Mammary epithelial cell (primary cell): ENCODE measurements at regions of chr20 and their contacts with region 1.

Region 1: GRCh38 chr20:14189794-14190402 is 147.5 kb downstream of the FLRT3 start:
- DNase-seq: peak; percentile 44
- H3K4me3 ChIP-seq: no peak overlapping the region
- H3K27ac ChIP-seq: no peak overlapping the region
- H3K4me1 ChIP-seq: peaks cover 5% of the 10 kb centered on the region
- H3K27me3 ChIP-seq: no peaks in the 10 kb centered on the region
- CTCF ChIP-seq: peak; percentile 52 to 65

Region 2: DNA sequence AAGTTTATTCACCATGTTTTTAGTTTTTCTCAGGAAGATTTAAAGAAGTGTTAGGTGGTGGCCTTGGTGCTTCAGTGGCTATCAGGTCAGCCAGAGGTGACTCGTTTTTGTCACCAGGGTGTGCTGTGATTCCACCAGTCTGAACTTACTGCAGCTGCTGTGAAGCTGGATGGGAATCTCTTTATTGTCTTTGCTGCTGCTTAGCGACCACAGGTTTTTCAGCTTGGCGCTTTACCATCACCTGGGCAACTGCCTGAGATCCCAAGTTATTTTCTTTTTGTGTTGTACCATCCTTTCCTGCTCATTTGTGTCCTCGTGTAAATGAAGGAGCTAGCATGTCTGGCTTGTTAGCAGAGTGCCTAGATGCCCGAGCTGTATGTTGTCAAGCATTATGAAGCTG is 47.7 kb before region 1 on chr20:
- CTCF ChIA-PET with region 1: no interaction called
- dilution Hi-C with region 1: no loop called
- in situ Hi-C with region 1: no loop called
- intact Hi-C with region 1: loop called (anchors 1 kb)
- DNase-seq: peak; percentile 66
- H3K4me3 ChIP-seq: no peak overlapping the region
- H3K27ac ChIP-seq: no peak overlapping the region
- H3K4me1 ChIP-seq: peaks cover 6% of the 10 kb centered on the region
- H3K27me3 ChIP-seq: no peaks in the 10 kb centered on the region
- CTCF ChIP-seq: peak; percentile 70 to 78

Region 3: GRCh38 chr20:14264869-14265268 is 75.0 kb after region 1 on chr20:
- CTCF ChIA-PET with region 1: no interaction called
- dilution Hi-C with region 1: no loop called
- in situ Hi-C with region 1: no loop called
- intact Hi-C with region 1: loop called (anchors 1 kb)
- DNase-seq: peak; percentile 9
- H3K4me3 ChIP-seq: no peak overlapping the region
- H3K27ac ChIP-seq: no peak overlapping the region
- H3K4me1 ChIP-seq: peaks cover under 1% of the 10 kb centered on the region
- H3K27me3 ChIP-seq: no peaks in the 10 kb centered on the region
- CTCF ChIP-seq: peak; percentile 28 to 56

Region 4: DNA sequence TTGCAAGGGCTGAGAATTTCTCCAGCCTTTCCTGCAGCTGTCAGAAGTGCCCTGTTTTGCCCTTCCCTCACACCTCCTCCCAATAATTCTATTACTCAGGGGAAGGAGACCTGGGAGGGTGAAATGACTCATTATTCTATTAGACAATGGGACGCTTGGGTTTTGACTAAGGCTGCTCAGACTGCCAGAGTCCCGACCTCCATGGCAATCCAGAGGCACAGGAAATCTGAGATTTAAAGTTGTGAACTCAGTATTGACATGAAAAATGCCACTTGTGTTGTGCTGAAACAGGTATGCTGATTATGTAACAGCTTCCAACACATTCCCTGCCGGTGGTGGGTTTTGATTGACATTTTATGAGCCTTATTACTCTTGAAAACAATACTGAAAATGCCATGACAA is 773.4 kb after region 1 on chr20:
- CTCF ChIA-PET with region 1: no interaction called
- dilution Hi-C with region 1: no loop called
- in situ Hi-C with region 1: no loop called
- intact Hi-C with region 1: loop called (anchors 10 kb)
- DNase-seq: peak; percentile 88
- H3K4me3 ChIP-seq: peak overlapping the region in 2 of 3 experiments; percentile 3 to 36
- H3K27ac ChIP-seq: peak overlapping the region; percentile 85
- H3K4me1 ChIP-seq: peaks cover 21% of the 10 kb centered on the region
- H3K27me3 ChIP-seq: no peaks in the 10 kb centered on the region
- CTCF ChIP-seq: no peak